Sigmoid colon (tissue), 7 donors: ENCODE measurements at regions of chr4 and their contacts with region 1.

Region 1: GRCh38 chr4:16196478-16197393 is 29.5 kb downstream of the TAPT1 start:
- DNase-seq: no peak
- H3K4me3 ChIP-seq: peak overlapping the region in 3 of 4 donors; percentile 8 to 38 (median 36)
- H3K27ac ChIP-seq: peak overlapping the region; percentile 37 to 76 (median 59)
- H3K4me1 ChIP-seq: peaks cover 0 to 72% (median 55%) of the 10 kb centered on the region in 4 donors
- H3K27me3 ChIP-seq: no peaks in the 10 kb centered on the region
- CTCF ChIP-seq: peak; percentile 8 to 66 (median 29)
- EP300 ChIP-seq: no peak
- POLR2A ChIP-seq: no peak

Region 2: GRCh38 chr4:16026160-16026761 is 170.5 kb before region 1 on chr4:
- intact Hi-C with region 1: loop called (anchors 5 kb)
- DNase-seq: no peak
- H3K4me3 ChIP-seq: no peak overlapping the region
- H3K27ac ChIP-seq: no peak overlapping the region
- H3K4me1 ChIP-seq: peaks cover 0 to 10% (median 0%) of the 10 kb centered on the region in 4 donors
- H3K27me3 ChIP-seq: no peaks in the 10 kb centered on the region
- CTCF ChIP-seq: peak; percentile 58 to 79 (median 70)
- EP300 ChIP-seq: no peak
- POLR2A ChIP-seq: no peak

Region 3: GRCh38 chr4:16225863-16226815 is 29.4 kb after region 1 on chr4 and contains the start of gene TAPT1:
- intact Hi-C with region 1: loop called (anchors 2 kb)
- DNase-seq: peak; percentile 89
- H3K4me3 ChIP-seq: peak within 1 kb of the TSS; percentile 60 to 85 (median 68)
- H3K27ac ChIP-seq: peak within 1 kb of the TSS; percentile 93 to 99 (median 96)
- H3K4me1 ChIP-seq: peaks cover 0 to 53% (median 43%) of the 10 kb centered on the region in 4 donors
- H3K27me3 ChIP-seq: no peaks in the 10 kb centered on the region
- CTCF ChIP-seq: no peak
- EP300 ChIP-seq: no peak
- POLR2A ChIP-seq: no peak
- total RNA-seq, gene TAPT1: 29.4 to 43.8 (median 37.1) TPM

Region 4: GRCh38 chr4:16264798-16265197 is 68.1 kb after region 1 on chr4:
- intact Hi-C with region 1: loop called (anchors 5 kb)
- DNase-seq: no peak
- H3K4me3 ChIP-seq: no peak overlapping the region
- H3K27ac ChIP-seq: no peak overlapping the region
- H3K4me1 ChIP-seq: peaks cover 0 to 3% (median 0%) of the 10 kb centered on the region in 4 donors
- H3K27me3 ChIP-seq: no peaks in the 10 kb centered on the region
- CTCF ChIP-seq: peak in 3 of 4 experiments; percentile 52
- EP300 ChIP-seq: no peak
- POLR2A ChIP-seq: no peak

Region 5: GRCh38 chr4:16329125-16329796 is 132.5 kb after region 1 on chr4:
- intact Hi-C with region 1: no loop called
- DNase-seq: no peak
- H3K4me3 ChIP-seq: no peak overlapping the region
- H3K27ac ChIP-seq: no peak overlapping the region
- H3K4me1 ChIP-seq: no peaks in the 10 kb centered on the region
- H3K27me3 ChIP-seq: no peaks in the 10 kb centered on the region
- CTCF ChIP-seq: no peak
- EP300 ChIP-seq: no peak
- POLR2A ChIP-seq: no peak